Dendritic cell treated with granulocyte-macrophage colony-stimulating factor and Interleukin-4, amounts not matched to agents 40 ng/mL and 50 ng/mL, for 4 days (primary cell): ENCODE measurements at regions of chr16 and their contacts with region 1.

Region 1: GRCh38 chr16:55760310-55761001 is 72.4 kb downstream of the CES1 start:
- H3K4me3 Mint-ChIP-seq: peak overlapping the region; percentile 66
- H3K27ac Mint-ChIP-seq: peak overlapping the region; percentile 19
- H3K4me1 Mint-ChIP-seq: peaks cover 35% of the 10 kb centered on the region
- H3K27me3 Mint-ChIP-seq: peaks cover 29% of the 10 kb centered on the region

Region 2: GRCh38 chr16:55809386-55809785 is 48.9 kb after region 1 on chr16:
- intact Hi-C with region 1: no loop called
- H3K4me3 Mint-ChIP-seq: no peak overlapping the region
- H3K27ac Mint-ChIP-seq: no peak overlapping the region
- H3K4me1 Mint-ChIP-seq: no peaks in the 10 kb centered on the region
- H3K27me3 Mint-ChIP-seq: peaks cover 10% of the 10 kb centered on the region

Region 3: GRCh38 chr16:55830658-55831294 is 70.3 kb after region 1 on chr16:
- intact Hi-C with region 1: loop called (anchors 2 kb)
- H3K4me3 Mint-ChIP-seq: no peak overlapping the region
- H3K27ac Mint-ChIP-seq: no peak overlapping the region
- H3K4me1 Mint-ChIP-seq: peaks cover 47% of the 10 kb centered on the region
- H3K27me3 Mint-ChIP-seq: peaks cover 12% of the 10 kb centered on the region

Region 4: GRCh38 chr16:55853114-55853513 is 92.7 kb after region 1 on chr16:
- intact Hi-C with region 1: no loop called
- H3K4me3 Mint-ChIP-seq: no peak overlapping the region
- H3K27ac Mint-ChIP-seq: no peak overlapping the region
- H3K4me1 Mint-ChIP-seq: no peaks in the 10 kb centered on the region
- H3K27me3 Mint-ChIP-seq: peaks cover 16% of the 10 kb centered on the region